ENCODE measurements at regions of chr1 and their contacts with region 1.

Region 1: GRCh38 chr1:153922972-153923925 is at the start of gene GATAD2B:
- DNase-seq: peak; percentile 99
- ATAC-seq: peak; percentile 97
- H3K4me3 Mint-ChIP-seq: peak within 1 kb of the TSS; percentile 96
- H3K27ac Mint-ChIP-seq: peak within 1 kb of the TSS; percentile 96
- H3K4me1 Mint-ChIP-seq: peaks cover 26% of the 10 kb centered on the region
- H3K27me3 Mint-ChIP-seq: no peaks in the 10 kb centered on the region
- CTCF ChIP-seq: no peak
- total RNA-seq, gene GATAD2B: 42.1 to 46.9 TPM (median 44.5 TPM) in 3 replicates

Region 2: DNA sequence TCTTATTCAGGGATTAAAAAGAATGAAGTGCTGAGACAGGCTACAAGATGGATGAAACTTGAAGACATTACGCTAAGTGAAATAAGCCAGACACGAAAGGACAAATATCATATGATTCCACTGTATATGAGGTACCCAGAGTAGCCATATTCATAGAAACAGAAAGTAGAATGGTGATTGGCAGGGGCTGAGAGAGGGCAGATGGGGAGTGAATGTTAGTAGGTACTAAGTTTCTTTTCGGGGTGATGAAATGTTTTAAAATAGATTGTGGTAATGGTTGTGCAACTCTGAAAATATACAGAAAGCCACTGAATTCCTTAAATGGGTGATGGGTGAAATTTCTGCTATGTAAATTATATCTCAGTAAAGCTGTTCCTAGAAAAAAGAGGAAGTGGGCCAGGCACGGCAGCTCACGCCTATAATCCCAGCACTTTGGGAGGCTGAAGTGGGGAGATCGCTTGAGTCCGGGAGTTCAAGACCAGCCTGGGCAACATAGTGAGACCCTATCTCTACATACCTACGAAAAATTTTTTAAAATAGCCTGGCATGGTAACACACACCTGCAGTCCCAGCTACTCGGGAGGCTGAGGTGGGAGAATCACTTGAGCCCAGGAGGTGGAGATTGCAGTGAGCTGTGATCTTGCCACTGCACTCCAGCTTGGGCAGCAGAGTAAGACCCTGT is 132.1 kb before region 1 on chr1:
- CTCF ChIA-PET with region 1: interaction called, 11 read pairs
- POLR2A ChIA-PET with region 1: interaction called, 3 read pairs
- DNase-seq: no peak
- ATAC-seq: no peak
- H3K4me3 Mint-ChIP-seq: no peak overlapping the region
- H3K27ac Mint-ChIP-seq: no peak overlapping the region
- H3K4me1 Mint-ChIP-seq: peaks cover 24% of the 10 kb centered on the region
- H3K27me3 Mint-ChIP-seq: no peaks in the 10 kb centered on the region; the same call in 1 of the 2 replicates
- CTCF ChIP-seq: no peak

Region 3: GRCh38 chr1:153967082-153968000 is 44.1 kb after region 1 on chr1 and contains the start of gene CREB3L4:
- CTCF ChIA-PET with region 1: interaction called, 4 read pairs
- POLR2A ChIA-PET with region 1: interaction called, 24 read pairs
- DNase-seq: peak; percentile 92
- ATAC-seq: peak; percentile 79
- H3K4me3 Mint-ChIP-seq: peak within 1 kb of the TSS; percentile 80
- H3K27ac Mint-ChIP-seq: peak within 1 kb of the TSS; percentile 98
- H3K4me1 Mint-ChIP-seq: peaks cover 31% of the 10 kb centered on the region
- H3K27me3 Mint-ChIP-seq: no peaks in the 10 kb centered on the region
- CTCF ChIP-seq: no peak
- total RNA-seq, gene CREB3L4: 33.1 to 35.2 TPM (median 34.6 TPM) in 3 replicates

Region 4: DNA sequence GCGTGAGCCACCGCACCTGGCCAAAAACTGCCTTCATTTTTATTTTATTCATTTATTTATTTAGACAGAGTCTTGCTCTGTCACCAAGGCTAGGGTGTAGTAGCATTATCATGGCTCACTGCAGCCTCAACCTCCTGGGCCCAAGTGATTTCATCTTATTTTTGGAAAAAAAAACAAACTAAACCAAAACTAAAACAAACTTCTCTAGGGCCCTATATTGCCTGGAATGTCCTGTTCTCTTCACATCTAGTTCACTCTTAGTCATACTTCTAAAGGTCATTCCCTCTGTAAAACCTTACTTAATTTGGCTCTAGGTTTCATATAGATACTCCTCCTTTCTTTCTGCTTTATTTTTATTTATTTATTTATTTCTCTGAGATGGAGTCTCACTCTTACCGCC is 82.9 kb after region 1 on chr1:
- CTCF ChIA-PET with region 1: no interaction called
- POLR2A ChIA-PET with region 1: no interaction called
- DNase-seq: no peak
- ATAC-seq: no peak
- H3K4me3 Mint-ChIP-seq: no peak overlapping the region
- H3K27ac Mint-ChIP-seq: no peak overlapping the region
- H3K4me1 Mint-ChIP-seq: no peaks in the 10 kb centered on the region
- H3K27me3 Mint-ChIP-seq: no peaks in the 10 kb centered on the region
- CTCF ChIP-seq: no peak

Measured in WTC11 (cell line).